ENCODE measurements at regions of chr11 and their contacts with region 1.

Region 1: DNA sequence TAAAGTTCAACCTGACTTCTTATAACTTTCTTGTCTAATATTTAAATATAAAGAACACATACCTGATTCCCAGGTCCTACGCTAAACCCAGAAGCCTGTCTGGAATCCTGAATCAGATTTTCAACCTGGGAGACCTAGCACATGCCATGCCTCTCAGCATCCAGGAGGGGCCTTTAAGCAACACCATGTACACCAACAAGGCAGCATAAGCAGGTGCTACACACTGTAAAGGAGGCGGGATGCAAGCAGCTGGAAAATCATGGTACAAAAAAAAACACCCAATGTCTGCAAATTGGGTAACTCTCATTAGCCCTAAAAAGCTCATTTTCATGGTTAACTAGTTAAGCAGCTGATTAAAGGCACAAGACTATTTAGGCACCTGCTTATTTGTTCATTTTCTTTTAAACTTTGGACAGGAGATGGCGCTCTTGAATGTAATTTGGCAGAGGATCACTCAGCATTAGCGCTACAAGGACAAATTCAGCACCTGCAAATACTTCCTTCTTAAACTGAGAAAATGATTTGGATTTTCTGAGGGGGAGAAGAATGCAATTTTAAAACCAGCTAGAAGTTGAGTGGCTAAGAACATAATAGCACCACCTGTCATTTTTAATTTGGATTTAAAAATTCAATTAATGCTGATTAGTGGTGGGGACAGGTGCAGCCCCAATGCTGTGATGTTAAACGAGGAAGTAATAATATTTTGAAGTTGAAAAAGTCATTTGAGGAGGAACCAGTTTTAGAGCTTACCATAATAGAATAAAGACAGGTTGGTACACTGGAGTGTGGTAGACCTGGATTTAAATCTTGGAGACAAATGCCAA is 104.0 kb downstream of the FAR1 start:
- DNase-seq: no peak
- ATAC-seq: peak; percentile 75
- H3K4me3 Mint-ChIP-seq: no peak overlapping the region
- H3K27ac Mint-ChIP-seq: no peak overlapping the region
- H3K4me1 Mint-ChIP-seq: no peaks in the 10 kb centered on the region
- H3K27me3 Mint-ChIP-seq: peaks cover 10% of the 10 kb centered on the region

Region 2: GRCh38 chr11:13668102-13668956 is 104.1 kb before region 1 on chr11 and contains the start of gene FAR1:
- CTCF ChIA-PET with region 1: no interaction called
- DNase-seq: peak; percentile 98
- ATAC-seq: peak; percentile 92
- H3K4me3 Mint-ChIP-seq: peak within 1 kb of the TSS; percentile 96
- H3K27ac Mint-ChIP-seq: peak within 1 kb of the TSS; percentile 97
- H3K4me1 Mint-ChIP-seq: peaks cover 39% of the 10 kb centered on the region
- H3K27me3 Mint-ChIP-seq: peaks cover 15% of the 10 kb centered on the region
- total RNA-seq, gene FAR1: 56.9 to 57.0 TPM

Region 3: GRCh38 chr11:13928566-13929251 is 156.3 kb after region 1 on chr11:
- CTCF ChIA-PET with region 1: no interaction called
- DNase-seq: no peak
- ATAC-seq: no peak
- H3K4me3 Mint-ChIP-seq: no peak overlapping the region
- H3K27ac Mint-ChIP-seq: no peak overlapping the region
- H3K4me1 Mint-ChIP-seq: peaks cover 29% of the 10 kb centered on the region
- H3K27me3 Mint-ChIP-seq: no peaks in the 10 kb centered on the region

Region 4: DNA sequence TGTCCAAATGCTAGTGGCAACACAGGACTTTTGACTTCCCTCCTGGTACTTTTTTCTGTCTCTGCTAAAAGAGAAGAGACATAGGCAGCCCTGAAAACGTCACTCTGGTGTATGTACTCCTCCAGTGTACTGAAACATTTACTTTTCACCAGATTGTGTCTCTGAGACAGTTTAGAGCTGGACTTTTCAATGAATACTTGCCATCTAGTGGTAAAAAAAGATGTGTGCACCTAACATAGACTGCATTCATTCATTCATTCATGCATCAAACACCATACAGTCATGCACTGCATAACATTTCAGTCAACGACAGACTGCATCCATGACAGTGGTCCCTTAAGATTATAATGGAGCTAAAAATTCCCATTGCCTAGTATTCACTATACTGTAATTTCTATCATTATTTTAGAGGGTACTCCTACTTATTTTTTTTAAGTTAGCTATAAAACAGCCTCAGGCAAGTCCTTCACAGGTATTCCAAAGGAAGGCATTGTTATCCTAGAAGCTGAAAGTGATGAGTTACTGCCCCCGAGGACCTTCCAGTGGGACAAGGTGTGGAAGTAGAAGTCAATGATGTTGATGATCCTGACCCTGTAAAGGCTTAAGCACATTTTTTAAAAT is 376.3 kb after region 1 on chr11:
- CTCF ChIA-PET with region 1: interaction called, 29 read pairs
- DNase-seq: no peak
- ATAC-seq: peak; percentile 67
- H3K4me3 Mint-ChIP-seq: no peak overlapping the region
- H3K27ac Mint-ChIP-seq: no peak overlapping the region
- H3K4me1 Mint-ChIP-seq: peaks cover 6% of the 10 kb centered on the region
- H3K27me3 Mint-ChIP-seq: peaks cover 6% of the 10 kb centered on the region

Region 5: GRCh38 chr11:14249121-14249963 is 476.9 kb after region 1 on chr11:
- CTCF ChIA-PET with region 1: interaction called, 17 read pairs
- DNase-seq: peak; percentile 79
- ATAC-seq: peak; percentile 72
- H3K4me3 Mint-ChIP-seq: peak overlapping the region; percentile 0
- H3K27ac Mint-ChIP-seq: no peak overlapping the region
- H3K4me1 Mint-ChIP-seq: peaks cover 23% of the 10 kb centered on the region
- H3K27me3 Mint-ChIP-seq: peaks cover 13% of the 10 kb centered on the region